Heart right ventricle (tissue), 16 donors: ENCODE measurements at regions of chr12 and their contacts with region 1.

Region 1: DNA sequence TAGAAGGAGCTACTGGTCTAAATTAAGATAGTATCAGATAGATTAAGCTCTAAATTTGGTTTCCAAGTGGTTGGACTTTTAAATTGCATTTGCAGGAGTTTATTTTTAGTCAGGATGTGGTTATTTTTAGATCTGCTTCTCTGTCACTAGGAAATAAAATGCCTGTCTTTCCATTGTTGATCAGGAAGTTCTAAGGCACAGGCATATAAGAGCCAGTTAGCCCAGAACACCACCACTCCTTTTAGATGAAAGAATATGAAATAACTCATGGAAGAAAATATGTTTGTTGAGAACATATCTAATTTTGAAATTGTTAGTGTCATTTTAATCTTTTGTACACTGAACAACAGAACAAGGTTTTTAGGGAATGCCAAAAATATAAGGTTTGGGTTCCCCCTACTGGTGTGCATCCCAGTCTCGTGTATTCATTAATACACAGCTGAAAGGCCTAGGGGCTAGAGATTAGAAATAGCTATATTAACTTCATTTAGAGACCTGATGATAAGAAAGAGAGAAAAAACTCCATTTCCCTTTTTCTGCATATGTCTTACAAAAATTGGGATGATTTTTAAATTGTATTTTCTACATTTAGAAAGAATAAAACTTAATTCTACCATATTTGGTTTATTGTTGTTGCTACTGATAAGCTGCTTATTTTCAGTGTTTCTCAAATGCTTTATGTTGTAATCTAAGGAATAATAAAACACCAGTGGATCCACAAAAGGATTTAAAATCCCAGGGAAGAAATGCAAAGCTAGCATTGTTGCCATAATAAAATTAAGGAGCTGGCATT is 67.2 kb downstream of the RIC8B start:
- DNase-seq: peak in 1 of 2 donors; percentile 55
- ATAC-seq: peak; percentile 78 to 91 (median 87)
- H3K4me3 ChIP-seq: peak overlapping the region in 2 of 10 donors; percentile 6 to 18
- H3K27ac ChIP-seq: peak overlapping the region in 9 of 10 donors; percentile 1 to 78 (median 54)
- H3K4me1 ChIP-seq: peaks cover 9 to 50% (median 40%) of the 10 kb centered on the region in 9 donors
- H3K27me3 ChIP-seq: no peaks in the 10 kb centered on the region
- CTCF ChIP-seq: peak; percentile 29 to 82 (median 61)

Region 2: GRCh38 chr12:106386813-106387535 is 454.7 kb before region 1 on chr12:
- intact Hi-C with region 1: loop called in 6 of 10 experiments (anchors 2 to 10 kb)
- DNase-seq: no peak
- ATAC-seq: no peak
- H3K4me3 ChIP-seq: no peak overlapping the region
- H3K27ac ChIP-seq: no peak overlapping the region
- H3K4me1 ChIP-seq: no peaks in the 10 kb centered on the region
- H3K27me3 ChIP-seq: no peaks in the 10 kb centered on the region
- CTCF ChIP-seq: no peak

Region 3: GRCh38 chr12:106392759-106393158 is 448.9 kb before region 1 on chr12:
- intact Hi-C with region 1: loop called in 6 of 10 experiments (anchors 2 to 10 kb)
- DNase-seq: no peak
- ATAC-seq: no peak
- H3K4me3 ChIP-seq: no peak overlapping the region
- H3K27ac ChIP-seq: no peak overlapping the region
- H3K4me1 ChIP-seq: no peaks in the 10 kb centered on the region
- H3K27me3 ChIP-seq: no peaks in the 10 kb centered on the region
- CTCF ChIP-seq: no peak

Region 4: DNA sequence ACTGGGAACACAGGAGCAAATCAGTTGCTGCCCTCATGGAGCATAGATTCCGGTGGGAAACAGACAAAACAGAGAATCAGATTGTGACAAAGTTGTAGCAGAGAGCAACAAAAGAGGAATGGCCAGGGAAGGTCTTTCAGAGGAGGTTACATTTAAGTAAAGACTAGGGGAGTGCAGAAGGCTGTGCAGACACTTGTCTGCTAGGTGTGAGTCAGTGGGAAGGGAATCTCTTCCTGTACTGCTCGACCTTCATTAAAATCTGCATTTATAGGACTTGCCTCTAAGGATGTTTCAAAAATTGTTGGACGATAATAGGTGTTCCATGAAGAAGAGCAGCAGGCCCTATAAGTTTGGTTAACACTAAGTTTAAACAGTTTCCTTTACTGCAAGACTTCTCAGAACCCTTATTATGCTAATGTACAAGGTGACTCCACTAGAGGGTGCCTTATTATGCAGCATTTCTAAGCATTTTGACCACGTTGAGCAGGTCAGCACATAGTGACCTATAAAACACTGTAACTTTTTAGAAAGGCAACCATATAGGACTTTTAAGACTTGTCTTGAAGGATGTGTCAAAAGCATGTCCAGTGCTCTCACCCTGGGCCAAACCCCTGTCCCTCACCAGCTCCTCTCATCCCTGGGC is 159.0 kb before region 1 on chr12:
- intact Hi-C with region 1: loop called in 1 of 10 experiments (anchors 10 kb)
- DNase-seq: no peak
- ATAC-seq: peak in 1 of 8 donors; percentile 44
- H3K4me3 ChIP-seq: no peak overlapping the region
- H3K27ac ChIP-seq: no peak overlapping the region
- H3K4me1 ChIP-seq: no peaks in the 10 kb centered on the region
- H3K27me3 ChIP-seq: peaks cover 0 to 7% (median 0%) of the 10 kb centered on the region in 7 donors
- CTCF ChIP-seq: peak in 6 of 9 donors; percentile 20 to 47 (median 40)

Region 5: GRCh38 chr12:106766393-106766826 is 75.3 kb before region 1 on chr12:
- intact Hi-C with region 1: loop called in 2 of 10 experiments (anchors 5 kb)
- DNase-seq: peak; percentile 32 to 44
- ATAC-seq: peak; percentile 21 to 85 (median 77)
- H3K4me3 ChIP-seq: no peak overlapping the region
- H3K27ac ChIP-seq: peak overlapping the region in 4 of 10 donors; percentile 13 to 63 (median 31)
- H3K4me1 ChIP-seq: peaks cover 0 to 30% (median 12%) of the 10 kb centered on the region in 9 donors
- H3K27me3 ChIP-seq: peaks cover 0 to 28% (median 0%) of the 10 kb centered on the region in 7 donors
- CTCF ChIP-seq: no peak

Region 6: GRCh38 chr12:106774005-106774807 is 67.5 kb before region 1 on chr12 and contains the start of gene RIC8B:
- intact Hi-C with region 1: loop called in 3 of 10 experiments (anchors 1 to 5 kb)
- DNase-seq: peak; percentile 95 to 98
- ATAC-seq: peak; percentile 96 to 98 (median 97)
- H3K4me3 ChIP-seq: peak within 1 kb of the TSS; percentile 77 to 99 (median 94)
- H3K27ac ChIP-seq: peak within 1 kb of the TSS; percentile 88 to 99 (median 96)
- H3K4me1 ChIP-seq: peaks cover 2 to 40% (median 20%) of the 10 kb centered on the region in 9 donors
- H3K27me3 ChIP-seq: peaks cover 0 to 6% (median 0%) of the 10 kb centered on the region in 7 donors
- CTCF ChIP-seq: peak in 3 of 9 donors; percentile 11 to 21 (median 20)
- total RNA-seq, gene RIC8B: 14.1 to 32.1 (median 23.2) TPM